IMR-90 (cell line): ENCODE measurements at regions of chr9 and their contacts with region 1.

Region 1: GRCh38 chr9:125021069-125021468 is 80.2 kb upstream of the GOLGA1 start:
- DNase-seq: no peak
- ATAC-seq: no peak
- H3K4me3 ChIP-seq: no peak overlapping the region
- H3K27ac ChIP-seq: no peak overlapping the region
- H3K4me1 ChIP-seq: no peaks in the 10 kb centered on the region
- H3K27me3 ChIP-seq: no peaks in the 10 kb centered on the region
- CTCF ChIP-seq: no peak
- POLR2A ChIP-seq: no peak
- RAD21 ChIP-seq: no peak

Region 2: GRCh38 chr9:125003332-125003731 is 17.7 kb before region 1 on chr9:
- CTCF ChIA-PET with region 1: no interaction called
- POLR2A ChIA-PET with region 1: no interaction called
- dilution Hi-C with region 1: no loop called
- in situ Hi-C with region 1: no loop called
- intact Hi-C with region 1: no loop called
- DNase-seq: no peak
- ATAC-seq: no peak
- H3K4me3 ChIP-seq: no peak overlapping the region
- H3K27ac ChIP-seq: no peak overlapping the region
- H3K4me1 ChIP-seq: no peaks in the 10 kb centered on the region
- H3K27me3 ChIP-seq: no peaks in the 10 kb centered on the region
- CTCF ChIP-seq: no peak
- POLR2A ChIP-seq: no peak
- RAD21 ChIP-seq: no peak

Region 3: DNA sequence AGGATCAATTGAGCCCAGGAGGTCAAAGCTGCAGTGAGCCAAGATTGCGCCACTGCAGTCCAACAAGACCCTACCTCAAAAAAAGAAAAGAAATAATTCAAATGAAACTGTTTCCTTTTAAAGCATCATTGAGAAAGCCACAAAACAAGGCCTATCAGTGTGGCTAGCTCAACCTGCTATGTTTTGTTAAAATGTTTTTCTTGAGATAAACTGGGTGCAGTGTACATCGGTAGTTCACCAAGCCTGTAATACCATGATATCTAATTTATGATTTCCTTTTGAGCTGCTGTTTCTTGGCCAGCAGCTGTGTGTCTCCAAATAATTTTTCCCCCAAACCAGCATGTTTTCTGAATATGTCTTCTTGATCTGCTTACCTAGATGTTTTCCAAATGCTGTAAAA is 17.1 kb after region 1 on chr9:
- CTCF ChIA-PET with region 1: no interaction called
- POLR2A ChIA-PET with region 1: no interaction called
- dilution Hi-C with region 1: no loop called
- in situ Hi-C with region 1: no loop called
- intact Hi-C with region 1: loop called (anchors 1 kb)
- DNase-seq: no peak
- ATAC-seq: no peak
- H3K4me3 ChIP-seq: no peak overlapping the region
- H3K27ac ChIP-seq: no peak overlapping the region
- H3K4me1 ChIP-seq: no peaks in the 10 kb centered on the region; the same call in 1 of the 2 replicates
- H3K27me3 ChIP-seq: no peaks in the 10 kb centered on the region
- CTCF ChIP-seq: no peak
- POLR2A ChIP-seq: no peak
- RAD21 ChIP-seq: no peak

Region 4: DNA sequence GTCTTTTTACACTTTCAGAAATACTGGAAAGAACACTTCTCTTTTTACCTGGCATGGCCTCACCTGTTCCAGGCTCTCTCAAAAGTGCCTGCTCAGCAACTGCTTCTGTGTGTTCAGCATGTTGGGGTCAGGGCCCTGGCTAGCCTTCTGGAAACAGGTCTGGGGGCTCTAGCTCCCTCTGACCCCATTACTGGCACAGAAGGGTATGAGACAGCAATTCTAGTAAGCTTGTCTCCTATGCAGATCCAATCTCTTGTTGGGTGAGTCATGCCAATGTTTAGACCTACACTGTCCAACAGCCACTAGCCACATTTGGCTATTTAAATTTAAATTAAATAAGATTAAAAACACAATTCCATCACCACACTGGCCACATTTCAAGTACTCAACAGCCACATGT is 605.1 kb after region 1 on chr9:
- CTCF ChIA-PET with region 1: no interaction called
- POLR2A ChIA-PET with region 1: no interaction called
- dilution Hi-C with region 1: no loop called
- in situ Hi-C with region 1: no loop called
- intact Hi-C with region 1: no loop called
- DNase-seq: peak; percentile 74
- ATAC-seq: peak; percentile 92
- H3K4me3 ChIP-seq: no peak overlapping the region
- H3K27ac ChIP-seq: no peak overlapping the region
- H3K4me1 ChIP-seq: peaks cover 4% of the 10 kb centered on the region
- H3K27me3 ChIP-seq: no peaks in the 10 kb centered on the region
- CTCF ChIP-seq: no peak
- POLR2A ChIP-seq: no peak
- RAD21 ChIP-seq: no peak